Caco-2 (cell line): ENCODE measurements at regions of chr11 and their contacts with region 1.

Region 1: GRCh38 chr11:65569973-65570918 is at the start of gene ZNRD2:
- DNase-seq: peak; percentile 98 to 99
- H3K4me3 ChIP-seq: peak within 1 kb of the TSS; percentile 99
- H3K4me3 Mint-ChIP-seq: peak within 1 kb of the TSS; percentile 98
- H3K27ac Mint-ChIP-seq: peak within 1 kb of the TSS; percentile 97
- H3K4me1 ChIP-seq: peaks cover 31% of the 10 kb centered on the region
- H3K4me1 Mint-ChIP-seq: peaks cover 25% of the 10 kb centered on the region
- H3K27me3 ChIP-seq: no peaks in the 10 kb centered on the region
- H3K27me3 Mint-ChIP-seq: no peaks in the 10 kb centered on the region
- CTCF ChIP-seq: peak; percentile 40 to 58
- total RNA-seq, gene ZNRD2: 52.9 and 53.9 TPM in 2 replicates

Region 2: DNA sequence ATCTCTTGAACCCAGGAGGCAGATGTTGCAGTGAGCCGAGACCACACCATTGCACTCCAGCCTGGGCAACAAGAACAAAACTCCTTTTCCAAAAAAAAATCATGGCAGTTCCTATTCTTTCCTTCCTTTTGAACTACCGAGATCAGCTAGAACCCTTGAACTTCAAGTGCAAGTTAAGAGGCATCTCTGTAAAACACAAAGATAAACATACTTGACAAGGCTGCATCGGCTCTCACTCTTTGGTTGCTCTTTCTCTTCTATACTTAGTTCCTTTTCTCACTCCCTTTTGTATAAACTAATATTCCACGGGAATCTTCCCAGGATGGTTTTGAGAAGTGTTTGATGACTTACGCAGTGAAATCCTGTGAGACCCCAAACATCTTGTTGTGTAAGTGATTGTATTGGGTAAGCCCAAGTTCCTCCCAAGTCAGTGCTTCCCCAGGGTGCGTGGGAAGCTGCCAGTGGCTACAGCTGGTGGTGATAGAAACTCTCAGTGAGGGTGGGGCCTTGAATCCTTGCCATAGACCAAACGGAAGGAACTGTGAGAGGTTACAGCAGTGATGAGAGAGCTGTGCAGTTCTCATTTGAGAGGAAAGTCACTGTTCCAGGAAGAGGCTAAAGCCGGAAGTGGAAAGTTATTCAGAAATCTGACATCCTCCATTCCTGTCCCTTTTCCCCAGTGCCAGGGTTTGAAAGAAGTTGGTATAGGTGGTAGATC is 279.6 kb before region 1 on chr11:
- CTCF ChIA-PET with region 1: no interaction called
- POLR2A ChIA-PET with region 1: no interaction called
- intact Hi-C with region 1: no loop called
- DNase-seq: no peak
- H3K4me3 ChIP-seq: no peak overlapping the region
- H3K4me3 Mint-ChIP-seq: peak overlapping the region; percentile 83
- H3K27ac Mint-ChIP-seq: peak overlapping the region; percentile 97
- H3K4me1 ChIP-seq: peaks cover 47% of the 10 kb centered on the region
- H3K4me1 Mint-ChIP-seq: peaks cover 46% of the 10 kb centered on the region
- H3K27me3 ChIP-seq: no peaks in the 10 kb centered on the region
- H3K27me3 Mint-ChIP-seq: no peaks in the 10 kb centered on the region
- CTCF ChIP-seq: no peak

Region 3: GRCh38 chr11:65522640-65523322 is 47.5 kb before region 1 on chr11:
- CTCF ChIA-PET with region 1: interaction called, 3 read pairs
- POLR2A ChIA-PET with region 1: no interaction called
- intact Hi-C with region 1: loop called (anchors 2 kb)
- DNase-seq: peak; percentile 74 to 79
- H3K4me3 ChIP-seq: peak overlapping the region; percentile 36
- H3K4me3 Mint-ChIP-seq: peak overlapping the region; percentile 88
- H3K27ac Mint-ChIP-seq: peak overlapping the region; percentile 95
- H3K4me1 ChIP-seq: peaks cover 42% of the 10 kb centered on the region
- H3K4me1 Mint-ChIP-seq: peaks cover 25% of the 10 kb centered on the region
- H3K27me3 ChIP-seq: no peaks in the 10 kb centered on the region
- H3K27me3 Mint-ChIP-seq: no peaks in the 10 kb centered on the region
- CTCF ChIP-seq: no peak

Region 4: DNA sequence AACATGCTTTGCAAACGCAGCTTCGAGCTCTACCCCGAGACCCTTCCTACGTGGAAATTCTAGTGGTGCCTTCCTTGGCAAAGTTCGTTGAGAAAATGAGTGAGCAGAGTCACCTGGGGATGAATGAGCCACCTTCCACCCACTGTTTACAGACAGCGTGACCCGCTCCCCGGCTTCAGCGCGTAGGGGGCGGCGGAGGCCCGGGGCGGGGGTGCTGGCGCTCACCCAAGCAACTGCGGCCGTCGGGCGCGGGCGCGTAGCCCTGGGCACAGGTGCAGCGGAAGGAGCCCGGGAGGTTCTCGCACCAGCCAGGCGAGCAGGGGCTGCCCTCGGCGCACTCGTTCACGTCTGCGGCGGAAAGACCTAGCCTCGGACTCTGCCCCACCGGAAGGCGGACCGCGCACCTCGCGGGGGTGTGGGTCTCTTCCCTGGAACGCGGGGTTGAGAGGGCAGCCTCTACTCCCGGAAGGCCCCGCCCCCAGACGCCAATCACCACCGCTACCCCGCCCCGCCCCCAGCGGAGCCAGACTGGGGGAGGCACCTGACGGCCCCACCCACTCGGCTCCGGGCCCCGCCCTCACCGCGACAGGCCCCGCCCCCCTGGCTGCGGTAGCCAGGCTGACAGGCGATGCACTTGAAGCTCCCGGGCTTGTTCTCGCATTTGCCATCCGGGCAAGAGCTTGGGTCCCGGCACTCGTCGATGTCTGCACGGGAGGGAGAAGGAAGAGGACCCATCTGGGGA is 23.9 kb before region 1 on chr11:
- CTCF ChIA-PET with region 1: interaction called, 23 read pairs
- POLR2A ChIA-PET with region 1: interaction called, 3 read pairs
- intact Hi-C with region 1: loop called (anchors 1 kb)
- DNase-seq: peak; percentile 98 to 99
- H3K4me3 ChIP-seq: peak overlapping the region; percentile 58
- H3K4me3 Mint-ChIP-seq: peak overlapping the region; percentile 67
- H3K27ac Mint-ChIP-seq: no peak overlapping the region
- H3K4me1 ChIP-seq: peaks cover 23% of the 10 kb centered on the region
- H3K4me1 Mint-ChIP-seq: peaks cover 45% of the 10 kb centered on the region
- H3K27me3 ChIP-seq: no peaks in the 10 kb centered on the region
- H3K27me3 Mint-ChIP-seq: no peaks in the 10 kb centered on the region
- CTCF ChIP-seq: no peak

Region 5: GRCh38 chr11:65593518-65594298 is 23.5 kb after region 1 on chr11:
- CTCF ChIA-PET with region 1: interaction called, 9 read pairs
- POLR2A ChIA-PET with region 1: interaction called, 3 read pairs
- intact Hi-C with region 1: loop called (anchors 2 kb)
- DNase-seq: peak in 1 of 2 experiments; percentile 54
- H3K4me3 ChIP-seq: no peak overlapping the region
- H3K4me3 Mint-ChIP-seq: peak overlapping the region; percentile 45
- H3K27ac Mint-ChIP-seq: no peak overlapping the region
- H3K4me1 ChIP-seq: peaks cover 5% of the 10 kb centered on the region; the same call in 1 of the 2 replicates
- H3K4me1 Mint-ChIP-seq: no peaks in the 10 kb centered on the region
- H3K27me3 ChIP-seq: no peaks in the 10 kb centered on the region
- H3K27me3 Mint-ChIP-seq: no peaks in the 10 kb centered on the region
- CTCF ChIP-seq: peak; percentile 64 to 68

Region 6: GRCh38 chr11:65615229-65615941 is 45.1 kb after region 1 on chr11 and contains the start of gene PCNX3:
- CTCF ChIA-PET with region 1: interaction called, 4 read pairs
- POLR2A ChIA-PET with region 1: interaction called, 5 read pairs
- intact Hi-C with region 1: loop called (anchors 1 kb)
- DNase-seq: peak; percentile 100
- H3K4me3 ChIP-seq: peak within 1 kb of the TSS; percentile 91
- H3K4me3 Mint-ChIP-seq: peak within 1 kb of the TSS; percentile 96
- H3K27ac Mint-ChIP-seq: peak within 1 kb of the TSS; percentile 96
- H3K4me1 ChIP-seq: peaks cover 17% of the 10 kb centered on the region
- H3K4me1 Mint-ChIP-seq: peaks cover 24% of the 10 kb centered on the region
- H3K27me3 ChIP-seq: no peaks in the 10 kb centered on the region
- H3K27me3 Mint-ChIP-seq: no peaks in the 10 kb centered on the region
- CTCF ChIP-seq: no peak
- total RNA-seq, gene PCNX3: 52.7 and 52.8 TPM in 2 replicates